Activated CD4-positive, alpha-beta T cell treated with anti-CD3 and anti-CD28 coated beads, Interleukin-2, amount 10 ng/mL, durations not matched to agents 24 days and 14 days (primary cell): ENCODE measurements at regions of chr1 and their contacts with region 1.

Region 1: DNA sequence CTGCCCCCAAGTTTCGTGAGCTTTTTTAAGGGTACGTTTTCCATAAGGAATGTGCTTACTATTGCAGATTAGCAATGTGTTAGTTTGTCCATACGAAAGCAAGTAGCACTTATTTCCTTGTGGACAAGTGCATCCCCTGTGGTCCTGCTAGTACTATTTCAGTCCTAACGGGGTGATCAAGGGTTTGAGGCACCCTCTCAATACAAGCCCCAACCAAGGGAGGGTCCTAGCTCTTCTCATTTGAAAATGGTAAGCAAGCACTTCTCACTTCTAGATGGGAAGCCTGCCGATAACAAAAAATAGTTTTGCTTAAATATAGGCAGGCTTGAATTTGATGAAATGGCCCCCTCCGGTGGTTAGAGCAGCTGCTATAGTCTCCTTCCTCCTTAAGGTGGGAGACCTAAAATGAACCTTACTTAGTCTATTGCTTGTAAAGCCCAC is 64.0 kb upstream of the HMCN1 start:
- DNase-seq: peak; percentile 84
- H3K4me3 Mint-ChIP-seq: no peak overlapping the region
- H3K27ac Mint-ChIP-seq: no peak overlapping the region
- H3K4me1 Mint-ChIP-seq: peaks cover 24% of the 10 kb centered on the region
- H3K27me3 Mint-ChIP-seq: no peaks in the 10 kb centered on the region

Region 2: DNA sequence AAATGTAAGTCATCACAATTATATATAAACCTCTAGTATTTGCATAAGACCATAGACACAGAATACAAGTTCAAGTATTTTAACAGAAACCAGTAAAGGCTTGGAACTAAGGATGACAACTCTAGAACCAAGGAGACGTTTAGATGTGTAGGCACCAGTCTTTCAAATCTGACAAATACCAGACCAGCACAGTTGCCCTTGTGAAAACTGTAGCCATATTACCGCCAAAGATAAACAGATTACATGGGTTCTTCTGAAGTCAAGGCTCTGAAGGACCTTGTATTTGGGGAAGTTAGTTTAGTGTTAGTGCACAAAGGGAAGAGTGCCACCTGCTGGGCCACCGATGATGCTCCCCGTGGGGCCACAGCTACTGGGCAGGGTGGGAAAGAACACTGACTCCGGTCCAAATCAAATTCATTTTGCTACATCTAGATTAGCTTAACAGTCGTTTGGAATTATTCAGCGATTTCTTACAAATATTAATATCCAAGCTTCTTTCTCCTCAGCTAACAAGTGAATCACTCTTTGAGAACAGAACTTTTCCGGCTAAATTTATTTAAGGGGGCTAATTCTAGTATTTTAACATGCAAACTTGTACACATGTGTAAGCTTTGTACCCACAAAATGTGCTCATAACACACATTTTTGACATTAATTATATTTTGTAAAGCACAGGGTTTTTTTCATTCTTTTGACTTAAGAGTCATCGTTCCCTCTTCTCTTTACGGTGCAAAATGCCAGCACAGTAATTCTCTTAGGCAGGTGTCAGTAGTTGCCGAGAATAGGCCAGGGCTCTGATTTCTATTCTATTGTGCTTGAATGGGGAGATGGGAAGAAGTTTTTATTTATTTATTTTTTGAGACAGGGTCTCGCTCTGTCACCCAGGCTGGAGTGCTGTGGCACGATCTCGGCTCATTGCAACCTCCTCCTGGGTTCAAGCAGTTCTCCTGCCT is 687.9 kb before region 1 on chr1:
- intact Hi-C with region 1: loop called (anchors 5 kb)
- DNase-seq: peak; percentile 92
- H3K4me3 Mint-ChIP-seq: no peak overlapping the region
- H3K27ac Mint-ChIP-seq: no peak overlapping the region
- H3K4me1 Mint-ChIP-seq: peaks cover 7% of the 10 kb centered on the region
- H3K27me3 Mint-ChIP-seq: peaks cover 44% of the 10 kb centered on the region

Region 3: DNA sequence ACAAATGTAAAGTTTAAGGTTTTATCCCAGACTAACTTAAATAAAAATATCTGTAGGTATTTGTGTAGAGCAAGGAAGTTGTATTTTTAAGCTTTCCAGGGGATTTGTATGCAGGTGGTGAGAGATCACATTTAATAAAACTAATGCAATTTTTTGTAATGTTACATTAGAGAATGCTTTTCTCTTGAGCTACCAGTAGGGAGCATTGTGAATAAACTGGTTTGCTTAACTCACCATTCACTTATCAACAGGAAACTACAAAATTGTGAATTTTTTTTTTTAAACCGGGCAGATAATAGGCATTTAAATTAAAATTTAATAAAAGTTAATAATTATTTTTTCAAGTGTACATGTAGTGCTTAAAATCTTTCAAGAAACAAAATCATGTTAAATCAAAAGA is 431.8 kb before region 1 on chr1:
- intact Hi-C with region 1: loop called (anchors 5 kb)
- DNase-seq: no peak
- H3K4me3 Mint-ChIP-seq: no peak overlapping the region
- H3K27ac Mint-ChIP-seq: no peak overlapping the region
- H3K4me1 Mint-ChIP-seq: peaks cover 12% of the 10 kb centered on the region
- H3K27me3 Mint-ChIP-seq: no peaks in the 10 kb centered on the region

Region 4: DNA sequence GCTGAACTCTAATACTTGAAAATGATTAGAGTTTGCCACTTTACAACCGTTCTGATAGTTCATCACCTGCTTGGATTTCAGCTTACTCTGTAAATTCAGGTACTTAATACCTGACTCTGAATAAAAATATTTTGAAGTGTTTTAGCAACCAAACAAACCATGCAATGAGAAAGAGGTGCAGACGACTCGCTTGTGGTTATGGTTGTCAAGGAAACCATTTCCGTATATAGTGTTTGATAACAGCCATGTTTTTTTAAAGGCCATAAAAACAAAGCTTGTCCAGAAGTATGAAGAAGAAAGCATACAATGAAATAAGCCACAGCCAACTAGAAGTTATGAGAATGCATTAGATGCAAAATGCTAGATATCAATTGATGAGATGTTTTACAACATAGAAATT is 103.2 kb before region 1 on chr1:
- intact Hi-C with region 1: loop called (anchors 5 kb)
- DNase-seq: peak; percentile 89
- H3K4me3 Mint-ChIP-seq: peak overlapping the region; percentile 64
- H3K27ac Mint-ChIP-seq: peak overlapping the region; percentile 82
- H3K4me1 Mint-ChIP-seq: peaks cover 43% of the 10 kb centered on the region
- H3K27me3 Mint-ChIP-seq: no peaks in the 10 kb centered on the region

Region 5: DNA sequence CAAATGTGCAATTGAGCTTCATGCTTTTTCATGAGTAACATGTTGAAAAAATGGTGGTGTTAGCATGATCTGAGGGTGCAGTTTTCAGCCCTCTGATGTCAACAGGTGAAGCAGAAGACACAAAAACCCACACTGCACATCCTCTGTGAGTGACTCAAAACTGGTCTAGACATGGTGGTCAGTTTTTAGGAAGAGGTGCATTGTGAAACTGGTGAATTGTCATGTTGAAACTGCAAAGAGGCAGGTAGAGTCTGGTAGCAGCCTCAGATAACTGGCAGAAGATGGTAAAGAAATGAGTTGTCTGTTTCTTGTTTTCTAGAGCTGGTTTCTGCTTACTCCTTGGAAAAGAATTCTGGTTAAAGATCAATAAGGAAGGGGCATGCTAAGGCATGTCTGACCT is 33.4 kb before region 1 on chr1:
- intact Hi-C with region 1: loop called (anchors 2 kb)
- DNase-seq: peak; percentile 84
- H3K4me3 Mint-ChIP-seq: peak overlapping the region; percentile 18
- H3K27ac Mint-ChIP-seq: peak overlapping the region; percentile 92
- H3K4me1 Mint-ChIP-seq: peaks cover 20% of the 10 kb centered on the region
- H3K27me3 Mint-ChIP-seq: no peaks in the 10 kb centered on the region